ENCODE measurements at regions of chr6 and their contacts with region 1.

Region 1: DNA sequence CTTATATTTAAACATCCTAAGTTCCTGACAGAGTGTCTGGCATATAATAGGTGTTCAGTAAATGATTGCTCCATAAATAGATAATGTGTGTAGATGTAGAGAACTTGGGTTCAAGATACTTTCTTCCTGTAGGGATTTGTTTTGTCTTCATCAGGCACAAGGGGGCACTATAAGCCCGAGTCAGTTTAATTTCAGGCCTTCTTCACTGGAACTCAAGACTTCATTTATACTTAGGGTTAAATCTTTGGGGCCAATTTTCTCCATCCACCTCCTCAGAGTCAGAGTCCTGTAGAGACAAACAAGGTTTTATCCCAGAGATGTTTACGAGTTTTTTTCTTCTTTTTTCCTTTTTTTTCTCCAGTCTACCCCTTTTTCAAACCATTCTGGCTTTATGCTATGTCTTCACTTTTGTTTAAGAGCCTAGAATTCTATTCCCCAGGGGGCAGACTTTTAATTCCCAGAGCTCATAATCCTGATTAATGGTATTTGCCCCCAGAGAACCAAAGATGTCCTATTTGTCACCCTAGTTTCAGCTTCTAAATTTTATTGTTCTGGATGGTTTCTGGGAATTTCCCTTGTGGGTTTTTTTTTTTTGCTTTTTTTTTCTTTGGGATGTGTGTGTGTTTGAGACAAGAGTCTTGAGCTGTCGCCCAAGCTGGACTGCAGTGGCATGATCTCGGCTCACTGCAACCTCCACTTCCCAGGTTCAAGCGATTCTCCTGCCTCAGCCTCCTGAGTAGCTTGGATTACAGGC is 88.4 kb downstream of the HFE start:
- DNase-seq: peak; percentile 79
- H3K4me3 ChIP-seq: peak overlapping the region; percentile 74
- H3K27ac ChIP-seq: peak overlapping the region; percentile 94
- H3K4me1 ChIP-seq: peaks cover 30% of the 10 kb centered on the region
- CTCF ChIP-seq: peak; percentile 95

Region 2: DNA sequence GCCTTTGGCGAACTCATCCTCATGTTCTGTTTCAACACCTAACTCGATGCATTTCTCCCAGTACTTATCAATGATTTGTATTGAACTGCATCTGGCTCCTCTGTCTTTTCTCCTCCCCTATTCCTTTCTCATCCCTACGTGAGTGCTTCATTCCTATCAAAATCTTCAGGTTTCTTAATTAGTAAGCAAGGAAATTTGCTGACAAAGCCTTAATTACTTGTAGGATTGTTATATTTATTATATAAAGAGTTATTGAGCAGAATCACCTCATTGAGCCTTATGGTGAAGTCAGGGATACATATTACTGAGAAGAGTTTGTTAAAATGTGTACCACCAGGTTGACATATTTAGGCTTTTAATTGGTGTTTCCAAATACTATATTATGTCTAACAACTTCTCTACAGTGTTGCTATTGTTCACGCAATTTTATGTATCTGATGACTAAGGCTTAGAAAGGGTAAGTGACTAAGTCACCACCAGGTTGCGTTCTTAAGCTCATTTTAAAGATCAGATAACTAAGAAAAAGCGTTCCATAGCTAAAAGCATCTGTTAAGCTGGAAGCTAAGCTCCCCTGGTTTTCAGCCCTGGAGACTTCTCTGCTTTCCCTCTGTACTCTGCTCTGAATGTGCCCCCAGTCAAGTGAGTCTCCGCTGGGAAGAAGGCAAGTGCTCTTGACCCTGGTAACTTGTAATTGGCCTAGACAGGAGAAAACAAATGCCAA is 504.7 kb before region 1 on chr6:
- CTCF ChIA-PET with region 1: no interaction called
- POLR2A ChIA-PET with region 1: no interaction called
- intact Hi-C with region 1: no loop called
- DNase-seq: no peak
- H3K4me3 ChIP-seq: no peak overlapping the region
- H3K27ac ChIP-seq: no peak overlapping the region
- H3K4me1 ChIP-seq: no peaks in the 10 kb centered on the region
- CTCF ChIP-seq: no peak

Region 3: DNA sequence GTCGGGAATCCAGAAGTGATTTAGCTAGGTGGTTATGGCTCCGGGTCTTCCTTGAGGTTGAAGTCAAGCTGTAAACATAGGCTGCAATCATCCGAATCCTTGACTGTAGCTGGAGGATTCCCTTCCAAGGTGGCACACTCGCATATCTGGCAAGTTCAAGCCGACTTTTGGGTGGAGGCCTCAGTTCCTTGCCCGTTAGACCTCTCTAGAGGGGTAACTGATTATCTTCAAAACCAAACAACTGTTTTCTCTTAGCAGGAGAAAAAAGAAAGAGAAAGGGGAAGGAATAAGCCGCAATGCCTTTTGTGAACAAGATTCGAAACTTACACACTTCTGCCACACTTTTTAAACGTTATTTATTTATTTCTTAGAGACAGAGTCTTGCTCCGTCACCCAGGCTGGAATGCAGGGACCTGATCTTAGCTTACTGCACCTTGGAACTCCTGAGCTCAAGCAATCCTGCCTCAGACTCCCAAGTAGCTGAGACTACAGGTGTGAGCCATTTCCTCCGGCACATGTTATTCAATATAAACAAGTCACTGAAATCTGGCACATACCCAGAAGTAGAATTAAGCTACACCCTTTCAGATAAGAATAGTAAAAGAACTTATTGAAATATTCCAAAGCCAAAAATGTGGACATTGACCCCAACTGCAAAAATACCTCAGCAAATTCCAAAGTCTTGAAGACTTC is 12.0 kb before region 1 on chr6:
- CTCF ChIA-PET with region 1: interaction called, 3 read pairs
- POLR2A ChIA-PET with region 1: interaction called, 99 read pairs
- intact Hi-C with region 1: loop called (anchors 1 kb)
- DNase-seq: no peak
- H3K4me3 ChIP-seq: no peak overlapping the region
- H3K27ac ChIP-seq: peak overlapping the region; percentile 63
- H3K4me1 ChIP-seq: peaks cover 57% of the 10 kb centered on the region
- CTCF ChIP-seq: no peak

Region 4: GRCh38 chr6:26568601-26569432 is 393.2 kb after region 1 on chr6:
- CTCF ChIA-PET with region 1: no interaction called
- POLR2A ChIA-PET with region 1: no interaction called
- intact Hi-C with region 1: no loop called
- DNase-seq: peak; percentile 92
- H3K4me3 ChIP-seq: peak overlapping the region; percentile 82
- H3K27ac ChIP-seq: peak overlapping the region; percentile 29
- H3K4me1 ChIP-seq: peaks cover 24% of the 10 kb centered on the region
- CTCF ChIP-seq: peak; percentile 23; the same call in 1 of the 2 replicates

Region 5: DNA sequence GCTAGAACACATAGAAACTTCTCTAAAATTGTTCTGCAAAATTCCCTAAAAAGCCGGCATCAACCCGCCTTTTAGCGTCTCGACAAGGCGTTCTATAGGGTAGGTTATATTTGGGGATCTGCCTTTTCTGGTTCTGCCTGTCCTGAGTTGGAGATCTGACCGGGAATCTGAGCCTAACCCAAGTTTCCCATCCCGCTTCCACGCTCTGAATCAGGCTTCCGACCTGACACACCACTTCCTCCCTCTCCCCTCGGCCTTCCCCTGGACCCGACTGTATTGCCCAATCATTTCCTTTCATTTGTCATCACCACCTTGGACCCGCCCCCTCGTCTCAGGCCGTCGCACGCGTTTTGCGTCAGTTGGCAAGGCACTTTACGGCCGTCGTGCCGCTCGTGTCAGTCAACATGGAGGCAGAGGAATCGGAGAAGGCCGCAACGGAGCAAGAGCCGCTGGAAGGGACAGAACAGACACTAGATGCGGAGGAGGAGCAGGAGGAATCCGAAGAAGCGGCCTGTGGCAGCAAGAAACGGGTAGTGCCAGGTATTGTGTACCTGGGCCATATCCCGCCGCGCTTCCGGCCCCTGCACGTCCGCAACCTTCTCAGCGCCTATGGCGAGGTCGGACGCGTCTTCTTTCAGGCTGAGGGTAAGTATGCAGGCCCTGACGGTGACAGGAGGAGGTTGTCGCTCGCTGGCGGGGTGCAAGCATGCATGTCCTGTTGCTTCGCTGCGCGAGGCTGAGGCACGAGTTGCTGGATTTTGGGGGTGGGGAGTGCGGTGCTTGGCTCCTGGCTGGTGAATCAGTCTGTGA is 421.2 kb after region 1 on chr6 and contains the start of gene ABT1:
- CTCF ChIA-PET with region 1: interaction called, 6 read pairs
- POLR2A ChIA-PET with region 1: no interaction called
- intact Hi-C with region 1: loop called (anchors 5 kb)
- DNase-seq: peak; percentile 97
- H3K4me3 ChIP-seq: peak within 1 kb of the TSS; percentile 91
- H3K27ac ChIP-seq: peak within 1 kb of the TSS; percentile 60
- H3K4me1 ChIP-seq: peaks cover 30% of the 10 kb centered on the region
- CTCF ChIP-seq: no peak
- total RNA-seq, gene ABT1: 32.2 and 34.6 TPM in 2 replicates

Measured in OCI-LY7 (cell line).